CD8-positive, alpha-beta T cell (primary cell): ENCODE measurements at regions of chr12 and their contacts with region 1.

Region 1: GRCh38 chr12:101939856-101940265 is 62.5 kb downstream of the DRAM1 start:
- DNase-seq: peak in 8 of 9 experiments; percentile 28 to 73 (median 54)
- ATAC-seq: peak; percentile 75
- H3K4me3 ChIP-seq: no peak overlapping the region
- H3K4me3 Mint-ChIP-seq: no peak overlapping the region
- H3K27ac ChIP-seq: no peak overlapping the region
- H3K27ac Mint-ChIP-seq: no peak overlapping the region
- H3K4me1 ChIP-seq: no peaks in the 10 kb centered on the region
- H3K4me1 Mint-ChIP-seq: no peaks in the 10 kb centered on the region
- H3K27me3 ChIP-seq: no peaks in the 10 kb centered on the region
- H3K27me3 Mint-ChIP-seq: peaks cover 8% of the 10 kb centered on the region
- CTCF ChIP-seq: peak; percentile 73

Region 2: DNA sequence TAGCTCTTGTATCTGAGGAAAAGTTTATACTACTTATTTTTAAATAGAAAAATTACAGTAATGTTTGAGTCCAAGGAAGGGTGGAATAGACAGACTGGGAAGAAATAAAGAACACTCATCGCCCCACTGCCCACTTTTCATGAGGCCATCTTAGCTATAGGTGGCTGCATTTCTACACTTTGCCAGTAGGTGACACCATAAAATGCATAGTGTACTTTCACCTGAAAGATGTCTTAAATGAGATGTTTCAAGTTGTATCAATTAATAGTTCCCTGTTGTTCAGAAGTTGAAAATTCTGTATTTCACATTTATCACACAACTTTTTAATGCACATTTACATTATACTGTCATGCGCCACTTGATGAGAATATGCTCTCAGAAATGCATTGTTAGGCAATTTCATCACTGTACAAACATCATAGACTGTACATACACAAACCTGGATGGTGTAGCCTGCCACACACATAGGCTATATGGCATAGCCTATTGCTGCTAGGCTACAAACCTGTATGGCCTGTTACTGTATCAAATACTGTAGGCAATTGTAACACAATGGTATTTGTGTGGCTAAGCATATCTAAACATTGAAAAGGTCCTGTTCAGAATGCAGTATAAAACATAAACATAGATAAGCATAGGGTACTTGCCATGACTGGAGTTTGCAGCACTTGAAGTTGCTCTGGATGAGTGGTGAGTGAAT is 230.2 kb after region 1 on chr12:
- CTCF ChIA-PET with region 1: no interaction called
- POLR2A ChIA-PET with region 1: no interaction called
- intact Hi-C with region 1: loop called in 1 of 2 experiments (anchors 10 kb)
- DNase-seq: peak in 3 of 9 experiments; percentile 5 to 48 (median 35)
- ATAC-seq: peak; percentile 51
- H3K4me3 ChIP-seq: no peak overlapping the region
- H3K4me3 Mint-ChIP-seq: no peak overlapping the region
- H3K27ac ChIP-seq: no peak overlapping the region
- H3K27ac Mint-ChIP-seq: no peak overlapping the region
- H3K4me1 ChIP-seq: no peaks in the 10 kb centered on the region
- H3K4me1 Mint-ChIP-seq: no peaks in the 10 kb centered on the region
- H3K27me3 ChIP-seq: no peaks in the 10 kb centered on the region
- H3K27me3 Mint-ChIP-seq: no peaks in the 10 kb centered on the region
- CTCF ChIP-seq: peak; percentile 67

Region 3: GRCh38 chr12:102769319-102769916 is 829.6 kb after region 1 on chr12:
- CTCF ChIA-PET with region 1: no interaction called
- POLR2A ChIA-PET with region 1: no interaction called
- intact Hi-C with region 1: loop called in 1 of 2 experiments (anchors 2 kb)
- DNase-seq: peak in 4 of 9 experiments; percentile 11 to 39 (median 23)
- ATAC-seq: no peak
- H3K4me3 ChIP-seq: no peak overlapping the region
- H3K4me3 Mint-ChIP-seq: no peak overlapping the region
- H3K27ac ChIP-seq: no peak overlapping the region
- H3K27ac Mint-ChIP-seq: no peak overlapping the region
- H3K4me1 ChIP-seq: no peaks in the 10 kb centered on the region
- H3K4me1 Mint-ChIP-seq: no peaks in the 10 kb centered on the region
- H3K27me3 ChIP-seq: no peaks in the 10 kb centered on the region
- H3K27me3 Mint-ChIP-seq: peaks cover 8% of the 10 kb centered on the region
- CTCF ChIP-seq: no peak

Region 4: DNA sequence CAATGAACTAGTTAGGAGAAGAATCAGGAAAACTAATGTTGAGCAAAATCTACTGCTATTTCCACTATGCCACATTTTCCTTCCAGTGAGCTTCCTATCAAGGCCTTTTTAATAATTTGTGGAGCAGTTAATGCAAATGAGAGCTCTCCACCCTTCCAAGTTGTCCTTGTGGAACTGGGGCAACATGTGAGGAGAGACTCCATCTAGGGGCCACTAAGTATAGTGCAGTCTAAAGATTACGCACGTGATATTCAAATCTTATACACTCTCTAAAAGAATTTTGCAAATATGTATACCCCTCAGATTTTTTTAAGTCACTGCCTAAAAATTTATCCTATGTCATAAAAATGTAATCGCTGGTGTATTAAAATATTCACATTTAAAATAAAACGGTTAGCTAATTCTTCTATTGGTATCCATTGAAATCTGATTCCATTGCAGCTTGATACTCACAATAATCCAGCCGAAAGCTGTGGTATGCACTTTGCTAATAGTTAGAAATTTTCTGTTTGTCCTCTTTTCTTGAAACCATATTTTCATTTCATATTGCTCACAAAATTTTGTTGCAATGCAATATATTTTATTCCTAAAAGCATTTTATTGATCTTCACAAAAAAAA is 877.1 kb after region 1 on chr12:
- CTCF ChIA-PET with region 1: no interaction called
- POLR2A ChIA-PET with region 1: no interaction called
- intact Hi-C with region 1: loop called in 1 of 2 experiments (anchors 10 kb)
- DNase-seq: peak in 1 of 9 experiments; percentile 4
- ATAC-seq: no peak
- H3K4me3 ChIP-seq: no peak overlapping the region
- H3K4me3 Mint-ChIP-seq: no peak overlapping the region
- H3K27ac ChIP-seq: no peak overlapping the region
- H3K27ac Mint-ChIP-seq: no peak overlapping the region
- H3K4me1 ChIP-seq: no peaks in the 10 kb centered on the region
- H3K4me1 Mint-ChIP-seq: no peaks in the 10 kb centered on the region
- H3K27me3 ChIP-seq: peaks cover 0 to 2% of the 10 kb centered on the region in 2 experiments
- H3K27me3 Mint-ChIP-seq: peaks cover 18% of the 10 kb centered on the region
- CTCF ChIP-seq: no peak

Region 5: GRCh38 chr12:102883204-102883799 is 943.4 kb after region 1 on chr12:
- CTCF ChIA-PET with region 1: no interaction called
- POLR2A ChIA-PET with region 1: no interaction called
- intact Hi-C with region 1: loop called in 1 of 2 experiments (anchors 5 kb)
- DNase-seq: peak in 6 of 9 experiments; percentile 9 to 52 (median 34)
- ATAC-seq: no peak
- H3K4me3 ChIP-seq: no peak overlapping the region
- H3K4me3 Mint-ChIP-seq: no peak overlapping the region
- H3K27ac ChIP-seq: no peak overlapping the region
- H3K27ac Mint-ChIP-seq: no peak overlapping the region
- H3K4me1 ChIP-seq: no peaks in the 10 kb centered on the region
- H3K4me1 Mint-ChIP-seq: no peaks in the 10 kb centered on the region
- H3K27me3 ChIP-seq: no peaks in the 10 kb centered on the region
- H3K27me3 Mint-ChIP-seq: peaks cover 21% of the 10 kb centered on the region
- CTCF ChIP-seq: peak; percentile 61